ENCODE measurements at regions of chr2 and their contacts with region 1.

Region 1: DNA sequence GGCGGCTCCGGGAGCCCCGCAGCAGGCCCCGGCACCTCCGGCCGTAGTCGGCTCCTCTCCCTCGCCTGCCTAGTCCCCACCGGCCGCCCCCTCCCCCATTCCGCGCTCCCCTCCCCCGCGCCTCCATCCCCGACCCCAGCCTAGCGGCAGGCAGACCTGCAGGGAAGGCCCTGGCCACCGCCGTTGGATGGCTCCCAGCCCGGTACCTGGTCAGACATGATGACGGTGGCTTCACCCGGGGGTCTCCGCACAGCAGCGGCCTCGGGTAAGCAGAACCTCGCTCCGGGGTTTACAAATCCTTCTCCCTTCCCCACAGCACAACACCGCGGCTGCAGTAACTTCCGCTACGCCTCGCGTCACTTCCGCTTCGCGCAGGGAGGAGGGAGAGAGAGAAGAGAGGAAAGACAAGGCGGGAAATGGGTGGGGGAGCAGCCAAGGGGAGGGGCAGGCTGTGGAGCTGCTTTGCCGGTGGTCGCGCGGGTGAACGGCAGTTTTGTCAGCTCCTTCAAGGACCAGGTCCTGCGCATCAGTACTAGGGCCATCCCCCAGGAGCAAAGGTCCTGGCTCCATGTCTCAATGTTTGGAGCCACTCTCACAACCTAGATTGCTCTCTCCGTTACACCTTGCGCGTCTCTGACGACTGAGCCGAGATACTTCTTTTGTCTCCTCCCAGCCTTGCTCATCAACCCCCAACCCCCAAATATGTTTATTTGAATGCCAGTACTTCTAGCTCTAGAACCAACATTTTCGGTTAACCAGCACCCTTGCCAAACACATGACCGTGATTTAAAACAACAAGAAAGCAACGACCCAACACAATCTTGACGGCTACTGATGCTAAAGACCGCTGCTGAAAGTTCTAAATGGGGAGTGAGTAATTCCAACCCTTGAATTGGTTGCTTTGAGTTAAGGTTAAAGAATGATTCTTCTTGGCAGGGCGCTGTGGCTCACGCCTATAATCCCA is at the start of gene SUMO1:
- DNase-seq: peak; percentile 77 to 97 (median 92)
- ATAC-seq: peak; percentile 92 to 93
- H3K4me3 Mint-ChIP-seq: peak within 1 kb of the TSS; percentile 96 to 99 (median 98)
- H3K27ac Mint-ChIP-seq: peak within 1 kb of the TSS; percentile 95 to 100 (median 98)
- H3K4me1 Mint-ChIP-seq: peaks cover 17 to 43% (median 40%) of the 10 kb centered on the region in 4 donors
- H3K27me3 Mint-ChIP-seq: peaks cover 0 to 1% (median 0%) of the 10 kb centered on the region in 5 donors
- polyA plus RNA-seq, gene SUMO1: 136 to 166 (median 164) TPM

Region 2: DNA sequence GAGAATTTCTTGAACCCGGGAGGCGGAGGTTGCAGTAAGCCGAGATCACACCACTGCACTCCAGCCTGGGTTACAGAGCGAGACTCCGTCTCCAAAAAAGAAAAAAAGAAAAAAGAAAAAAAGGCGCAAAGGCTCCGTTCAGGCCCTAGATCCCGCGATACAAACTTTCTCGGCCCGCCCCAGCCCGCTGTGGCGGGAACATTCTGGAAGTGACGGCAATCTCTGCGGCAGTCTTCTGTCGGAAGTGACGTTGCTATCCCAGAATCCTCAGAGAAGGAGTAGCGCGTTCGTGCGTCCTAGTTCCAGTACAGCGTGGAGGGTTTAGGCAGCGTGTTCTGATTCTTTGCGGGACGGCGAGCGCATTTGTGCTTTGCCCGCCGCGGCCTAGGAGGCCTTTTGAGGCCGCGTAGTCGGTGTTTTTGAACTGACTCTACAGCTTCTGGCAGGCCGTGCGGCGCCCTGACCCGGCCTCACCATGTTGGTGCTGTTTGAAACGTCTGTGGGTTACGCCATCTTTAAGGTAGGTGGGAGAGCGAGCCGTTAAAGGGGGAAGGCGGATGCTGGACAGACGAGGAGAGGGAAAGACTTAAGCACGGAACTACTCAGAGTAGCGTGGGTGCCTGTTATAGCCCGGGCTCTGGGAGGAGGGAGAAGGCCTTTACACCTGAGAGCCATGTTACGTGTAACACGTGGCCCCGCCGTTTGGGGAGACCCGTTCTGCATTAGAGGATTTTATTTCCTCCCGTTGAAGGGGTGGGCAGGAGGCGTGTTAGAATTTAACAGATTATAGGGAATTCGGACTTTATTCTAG is 27.2 kb after region 1 on chr2 and contains the start of gene NOP58:
- POLR2A ChIA-PET with region 1: interaction called, 25 read pairs
- DNase-seq: peak; percentile 77 to 96 (median 92)
- ATAC-seq: peak; percentile 82 to 83
- H3K4me3 Mint-ChIP-seq: peak within 1 kb of the TSS in 9 of 10 donors; percentile 51 to 76 (median 69)
- H3K27ac Mint-ChIP-seq: peak within 1 kb of the TSS in 5 of 10 donors; percentile 72 to 90 (median 80)
- H3K4me1 Mint-ChIP-seq: peaks cover 0 to 35% (median 21%) of the 10 kb centered on the region in 4 donors
- H3K27me3 Mint-ChIP-seq: peaks cover 0 to 1% (median 0%) of the 10 kb centered on the region in 5 donors
- polyA plus RNA-seq, gene NOP58: 89.1 to 106 (median 96.5) TPM

Measured in naive thymus-derived CD8-positive, alpha-beta T cell (primary cell).